Endothelial cell of umbilical vein (primary cell): ENCODE measurements at regions of chr7 and their contacts with region 1.

Region 1: DNA sequence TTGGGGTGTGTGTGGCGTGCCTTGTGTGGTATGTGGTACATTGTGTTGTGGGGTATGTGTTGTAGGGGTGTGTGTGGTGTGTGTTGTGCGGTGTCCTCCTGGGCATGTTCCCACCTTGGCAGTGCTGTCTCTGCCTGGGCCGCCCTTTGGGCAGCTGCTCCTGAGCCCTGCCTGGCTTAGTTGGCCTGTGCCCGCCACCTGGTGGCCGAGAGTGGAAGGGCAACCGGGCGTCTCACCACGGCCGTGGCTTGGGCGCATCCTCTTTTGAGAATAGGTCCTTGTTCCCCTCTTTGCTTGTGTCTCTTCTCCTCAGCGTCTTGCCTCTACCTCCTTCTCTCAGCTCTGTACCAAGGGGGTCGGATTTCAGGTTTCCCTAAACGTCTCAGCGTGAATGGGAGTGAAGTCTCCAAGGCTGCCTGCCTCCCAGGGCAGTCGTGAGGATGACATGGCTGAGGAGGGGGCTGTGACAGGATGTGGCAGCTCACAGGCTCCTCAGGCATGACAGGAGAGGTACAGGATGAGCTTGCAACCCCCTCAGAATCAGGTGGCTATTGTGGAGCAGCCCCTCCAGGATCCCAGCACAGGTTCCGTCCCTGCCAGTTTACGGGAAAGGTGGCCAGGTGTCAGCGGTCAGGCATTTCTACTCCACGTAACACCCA is 98.4 kb upstream of the PODXL start:
- DNase-seq: peak; percentile 75
- H3K4me3 ChIP-seq: no peak overlapping the region
- H3K27ac ChIP-seq: no peak overlapping the region
- H3K4me1 ChIP-seq: peaks cover 20% of the 10 kb centered on the region
- H3K27me3 ChIP-seq: no peaks in the 10 kb centered on the region
- CTCF ChIP-seq: peak; percentile 92 to 97
- POLR2A ChIP-seq: no peak

Region 2: GRCh38 chr7:131409129-131409766 is 245.5 kb before region 1 on chr7:
- CTCF ChIA-PET with region 1: no interaction called
- POLR2A ChIA-PET with region 1: no interaction called
- dilution Hi-C with region 1: no loop called
- intact Hi-C with region 1: no loop called
- DNase-seq: no peak
- H3K4me3 ChIP-seq: no peak overlapping the region
- H3K27ac ChIP-seq: no peak overlapping the region
- H3K4me1 ChIP-seq: no peaks in the 10 kb centered on the region
- H3K27me3 ChIP-seq: no peaks in the 10 kb centered on the region
- CTCF ChIP-seq: no peak
- POLR2A ChIP-seq: no peak

Region 3: DNA sequence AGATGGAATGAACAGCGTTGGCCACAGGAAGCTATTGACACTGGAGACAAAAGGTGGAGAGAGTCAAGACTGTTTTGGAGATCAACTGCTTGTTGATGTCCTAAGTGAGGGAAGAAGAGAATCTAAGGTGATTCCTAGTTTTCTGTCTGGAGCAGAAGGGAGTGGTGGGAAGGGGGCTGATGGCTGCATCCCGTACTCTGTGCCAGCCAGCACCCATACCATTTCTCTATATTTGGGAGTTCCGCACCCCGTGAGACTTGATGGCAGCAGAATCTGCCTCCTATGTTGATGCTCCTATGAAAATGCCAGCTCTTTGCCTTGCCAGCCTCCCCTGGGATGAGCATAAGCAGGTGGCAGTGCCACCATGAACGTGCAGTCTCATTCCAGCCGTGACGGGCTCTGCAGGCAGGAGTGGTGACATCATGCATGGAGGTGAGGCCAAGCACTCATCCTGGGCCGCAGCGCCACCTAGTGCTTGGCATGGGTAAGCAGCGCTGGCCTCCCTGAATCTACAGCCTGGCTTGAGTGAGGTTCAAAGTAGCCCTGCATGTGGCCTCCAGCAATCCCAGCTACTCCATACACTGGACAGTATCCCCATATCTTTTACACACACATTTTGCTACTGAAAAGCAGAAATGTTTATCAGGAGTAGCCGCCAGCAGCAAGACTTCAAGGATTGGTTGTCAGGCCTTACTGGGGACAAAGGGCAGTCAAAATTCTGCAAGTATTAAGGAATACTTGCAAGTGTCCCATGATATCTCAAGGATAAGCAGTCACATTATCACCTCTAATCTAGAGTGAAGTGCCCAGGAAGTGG is 141.3 kb before region 1 on chr7:
- CTCF ChIA-PET with region 1: interaction called, 79 read pairs
- POLR2A ChIA-PET with region 1: interaction called, 4 read pairs
- dilution Hi-C with region 1: no loop called
- intact Hi-C with region 1: loop called (anchors 1 kb)
- DNase-seq: peak; percentile 88
- H3K4me3 ChIP-seq: no peak overlapping the region
- H3K27ac ChIP-seq: peak overlapping the region; percentile 67
- H3K4me1 ChIP-seq: peaks cover 21% of the 10 kb centered on the region
- H3K27me3 ChIP-seq: no peaks in the 10 kb centered on the region
- CTCF ChIP-seq: peak; percentile 97 to 100
- POLR2A ChIP-seq: no peak

Region 4: GRCh38 chr7:131546583-131547111 is 108.2 kb before region 1 on chr7:
- CTCF ChIA-PET with region 1: interaction called, 18 read pairs
- POLR2A ChIA-PET with region 1: no interaction called
- dilution Hi-C with region 1: no loop called
- intact Hi-C with region 1: loop called (anchors 1 kb)
- DNase-seq: peak; percentile 57
- H3K4me3 ChIP-seq: no peak overlapping the region
- H3K27ac ChIP-seq: no peak overlapping the region
- H3K4me1 ChIP-seq: peaks cover 29% of the 10 kb centered on the region
- H3K27me3 ChIP-seq: no peaks in the 10 kb centered on the region
- CTCF ChIP-seq: peak; percentile 83 to 85
- POLR2A ChIP-seq: no peak

Region 5: GRCh38 chr7:131581241-131582051 is 73.4 kb before region 1 on chr7:
- CTCF ChIA-PET with region 1: interaction called, 5 read pairs
- POLR2A ChIA-PET with region 1: no interaction called
- dilution Hi-C with region 1: no loop called
- intact Hi-C with region 1: loop called (anchors 2 kb)
- DNase-seq: peak; percentile 59
- H3K4me3 ChIP-seq: no peak overlapping the region
- H3K27ac ChIP-seq: no peak overlapping the region
- H3K4me1 ChIP-seq: peaks cover 9% of the 10 kb centered on the region
- H3K27me3 ChIP-seq: no peaks in the 10 kb centered on the region
- CTCF ChIP-seq: no peak
- POLR2A ChIP-seq: no peak

Region 6: GRCh38 chr7:131909151-131909768 is 254.5 kb after region 1 on chr7:
- CTCF ChIA-PET with region 1: no interaction called
- POLR2A ChIA-PET with region 1: no interaction called
- dilution Hi-C with region 1: no loop called
- intact Hi-C with region 1: no loop called
- DNase-seq: no peak
- H3K4me3 ChIP-seq: no peak overlapping the region
- H3K27ac ChIP-seq: no peak overlapping the region
- H3K4me1 ChIP-seq: no peaks in the 10 kb centered on the region
- H3K27me3 ChIP-seq: peaks cover 46 to 78% of the 10 kb centered on the region in 2 experiments
- CTCF ChIP-seq: no peak
- POLR2A ChIP-seq: no peak